HCT116 (cell line): ENCODE measurements at regions of chr1 and their contacts with region 1.

Region 1: DNA sequence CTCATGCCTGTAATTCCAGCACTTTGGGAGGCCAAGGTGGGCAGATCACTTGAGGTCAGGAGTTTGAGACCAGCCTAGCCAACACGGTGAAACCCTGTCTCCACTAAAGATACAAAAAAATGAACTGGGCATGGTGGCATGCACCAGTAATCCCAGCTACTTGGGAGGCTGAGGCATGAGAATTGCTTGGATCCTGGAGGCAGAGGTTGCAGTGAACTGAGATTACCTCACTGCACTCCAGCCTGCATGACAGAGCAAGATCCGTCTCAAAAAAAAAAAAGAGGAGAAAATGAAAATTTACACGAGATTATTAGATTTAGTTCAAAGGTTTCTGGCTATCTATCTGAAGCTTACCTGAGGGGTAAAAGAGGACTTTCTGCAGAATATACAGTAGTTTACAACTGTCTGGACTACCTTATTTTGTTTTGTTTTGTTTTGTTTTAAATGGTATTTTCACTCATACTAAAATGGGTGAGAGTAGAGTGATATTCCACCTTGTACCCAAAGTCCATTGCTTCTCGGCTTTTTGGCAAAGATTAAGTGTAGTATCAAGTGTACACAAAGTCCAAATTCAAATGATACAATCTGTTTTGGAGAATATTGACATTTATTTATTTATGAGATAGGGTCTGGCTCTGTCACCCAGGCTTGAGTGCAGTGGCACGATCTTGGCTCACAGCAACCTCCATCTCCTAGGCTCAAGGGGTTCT is 11.9 kb upstream of the SMG7 start:
- DNase-seq: no peak
- ATAC-seq: no peak
- H3K4me3 ChIP-seq: no peak overlapping the region
- H3K27ac ChIP-seq: no peak overlapping the region
- H3K4me1 ChIP-seq: peaks cover 13 to 22% of the 10 kb centered on the region in 2 experiments; a peak in 3 of 4 replicates
- H3K27me3 ChIP-seq: no peaks in the 10 kb centered on the region
- CTCF ChIP-seq: no peak
- POLR2A ChIP-seq: no peak
- RAD21 ChIP-seq: no peak

Region 2: GRCh38 chr1:183385340-183386144 is 74.9 kb before region 1 on chr1:
- CTCF ChIA-PET with region 1: no interaction called
- POLR2A ChIA-PET with region 1: no interaction called
- RAD21 ChIA-PET with region 1: no interaction called
- intact Hi-C with region 1: no loop called
- DNase-seq: no peak
- ATAC-seq: no peak
- H3K4me3 ChIP-seq: no peak overlapping the region
- H3K27ac ChIP-seq: no peak overlapping the region
- H3K4me1 ChIP-seq: no peaks in the 10 kb centered on the region
- H3K27me3 ChIP-seq: peaks cover 11% of the 10 kb centered on the region; the same call in 1 of the 2 replicates
- CTCF ChIP-seq: no peak
- POLR2A ChIP-seq: no peak
- RAD21 ChIP-seq: no peak

Region 3: DNA sequence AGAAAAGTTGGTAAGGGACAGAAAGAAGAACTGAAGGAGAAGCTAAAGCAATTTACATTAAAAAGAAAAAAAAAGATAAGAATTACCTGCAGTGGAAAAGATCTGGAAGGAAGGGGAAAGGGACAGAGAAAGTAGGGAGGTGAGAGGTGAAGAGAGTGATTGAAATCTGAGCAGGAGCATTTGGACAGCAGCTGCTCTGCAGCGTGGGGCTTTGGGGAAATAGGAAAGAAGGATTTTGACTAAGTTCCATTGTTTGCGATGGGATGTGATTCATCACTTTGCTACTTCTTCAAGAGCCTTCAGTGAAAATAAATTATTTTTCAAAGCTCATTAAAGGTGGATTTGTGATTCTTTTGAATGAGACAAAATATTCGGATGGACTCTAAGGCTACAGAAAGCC is 16.2 kb before region 1 on chr1:
- CTCF ChIA-PET with region 1: no interaction called
- POLR2A ChIA-PET with region 1: no interaction called
- RAD21 ChIA-PET with region 1: no interaction called
- intact Hi-C with region 1: loop called (anchors 1 kb)
- DNase-seq: no peak
- ATAC-seq: no peak
- H3K4me3 ChIP-seq: no peak overlapping the region
- H3K27ac ChIP-seq: no peak overlapping the region
- H3K4me1 ChIP-seq: no peaks in the 10 kb centered on the region
- H3K27me3 ChIP-seq: no peaks in the 10 kb centered on the region
- CTCF ChIP-seq: no peak
- POLR2A ChIP-seq: no peak
- RAD21 ChIP-seq: no peak